GM10248 (cell line): ENCODE measurements at regions of chr22 and their contacts with region 1.

Region 1: DNA sequence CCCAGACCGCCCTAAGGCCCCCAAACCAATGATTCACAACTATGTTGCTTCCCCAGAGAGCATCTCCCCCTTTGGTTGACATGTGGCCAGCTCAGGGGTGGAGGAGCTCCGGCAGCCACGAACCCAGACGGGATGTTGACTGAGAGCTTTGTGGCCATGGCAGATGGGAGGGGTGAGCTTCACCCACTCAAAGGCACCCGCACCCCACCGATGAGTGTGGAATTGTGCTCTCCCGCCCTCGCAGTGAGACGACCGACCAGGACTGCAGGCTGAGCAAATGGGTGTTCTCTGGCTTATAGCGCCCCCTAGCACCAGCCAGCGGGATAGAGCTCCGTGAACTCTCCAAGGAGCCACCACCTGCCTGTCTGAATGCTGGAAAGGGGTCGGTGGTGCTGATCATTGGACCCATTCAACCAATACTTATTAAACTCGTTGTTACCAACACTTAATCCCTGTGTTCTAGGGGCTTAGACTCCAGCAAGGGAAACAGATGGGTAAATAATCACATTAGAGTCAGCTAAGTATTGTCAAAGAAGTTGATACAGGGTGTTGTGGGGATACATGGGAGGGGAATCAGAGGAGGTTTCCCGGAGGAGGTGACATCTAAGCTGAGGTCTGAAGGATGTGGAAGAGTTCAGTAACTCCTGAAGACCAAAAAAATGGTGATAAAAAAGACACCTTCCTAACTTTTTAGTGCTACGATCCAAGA is 4.5 kb upstream of the TIMP3 start:
- DNase-seq: peak; percentile 70
- CTCF ChIP-seq: peak; percentile 82

Region 2: DNA sequence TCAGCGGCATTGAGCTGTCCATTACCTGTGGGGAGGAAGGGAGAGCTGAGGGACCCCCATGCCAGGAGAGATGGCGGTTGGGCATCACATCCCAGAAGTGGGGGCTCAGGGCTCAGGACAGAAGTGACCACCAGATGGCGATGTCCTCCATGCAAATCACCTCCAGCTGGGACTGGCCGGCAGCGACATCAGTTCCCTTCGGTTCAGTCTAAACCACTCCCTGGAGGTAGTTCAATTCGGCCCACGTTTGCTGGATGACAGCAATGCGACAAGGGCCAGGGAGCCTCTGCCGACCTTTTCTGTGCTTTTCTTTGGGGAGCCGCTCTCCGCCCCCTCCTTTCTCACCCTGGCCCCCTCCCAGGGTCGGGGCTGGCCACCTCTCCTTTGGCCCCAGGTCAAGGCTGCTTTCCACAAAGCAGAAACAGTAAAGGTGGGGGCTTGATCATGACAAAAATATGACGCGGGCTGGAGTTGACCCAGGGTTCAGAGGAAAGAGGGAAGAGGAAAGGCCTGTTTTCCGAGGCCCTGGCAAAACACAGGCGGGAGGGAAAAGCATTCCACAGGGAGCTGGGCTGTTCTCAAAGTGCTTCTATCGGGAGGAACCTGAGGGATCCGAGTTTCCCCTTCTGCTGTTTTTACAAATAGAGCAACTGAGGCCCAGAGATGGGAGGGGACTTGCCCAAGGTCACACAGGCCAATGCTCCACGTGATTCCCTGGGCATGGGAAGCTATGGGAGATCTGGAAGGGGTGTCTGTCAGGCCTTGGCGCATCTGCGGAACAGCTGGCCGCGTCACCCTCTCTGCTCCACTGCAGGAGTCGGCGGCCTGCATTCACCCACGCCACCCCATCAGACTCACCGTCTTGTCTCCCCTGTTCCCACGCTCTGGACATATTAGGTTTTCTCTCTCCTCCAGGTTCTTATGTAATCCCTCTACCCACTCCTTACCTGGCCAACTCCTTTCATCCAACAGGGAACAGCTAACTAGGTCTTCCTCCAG is 267.7 kb before region 1 on chr22:
- CTCF ChIA-PET with region 1: interaction called, 68 read pairs
- POLR2A ChIA-PET with region 1: no interaction called
- DNase-seq: peak; percentile 85
- CTCF ChIP-seq: peak; percentile 72

Region 3: GRCh38 chr22:32665676-32666075 is 131.3 kb before region 1 on chr22:
- CTCF ChIA-PET with region 1: interaction called, 175 read pairs
- POLR2A ChIA-PET with region 1: no interaction called
- DNase-seq: no peak
- CTCF ChIP-seq: no peak

Region 4: GRCh38 chr22:32754413-32755041 is 42.5 kb before region 1 on chr22:
- CTCF ChIA-PET with region 1: no interaction called
- POLR2A ChIA-PET with region 1: no interaction called
- DNase-seq: no peak
- CTCF ChIP-seq: no peak

Region 5: GRCh38 chr22:32781695-32782094 is 15.3 kb before region 1 on chr22:
- CTCF ChIA-PET with region 1: interaction called, 24 read pairs
- POLR2A ChIA-PET with region 1: no interaction called
- DNase-seq: no peak
- CTCF ChIP-seq: no peak

Region 6: DNA sequence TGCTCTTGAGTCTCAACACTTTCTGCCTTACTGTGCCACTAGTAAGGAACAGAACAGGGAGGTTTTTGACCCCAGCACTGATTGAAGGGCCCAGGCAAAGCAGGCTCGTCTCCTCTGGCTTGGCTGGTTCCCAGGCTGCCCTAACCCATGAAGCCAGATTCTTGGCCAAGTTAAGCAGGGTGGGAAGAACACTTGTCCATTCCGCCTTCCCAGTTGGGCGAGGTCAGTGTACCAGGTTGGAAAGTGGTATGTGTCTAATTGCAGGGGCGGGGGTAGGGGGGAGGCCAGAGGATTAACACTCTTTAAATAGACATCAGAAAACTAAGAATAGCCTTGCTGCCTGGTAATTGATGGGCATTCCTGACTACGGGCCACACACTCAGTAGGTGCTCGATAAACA is 18.9 kb after region 1 on chr22:
- CTCF ChIA-PET with region 1: interaction called, 49 read pairs
- POLR2A ChIA-PET with region 1: no interaction called
- DNase-seq: no peak
- CTCF ChIP-seq: no peak